Activated T-helper 1 cell treated with anti-CD3 and anti-CD28 coated beads, Interleukin-12 subunit alpha, Interleukin-12 subunit beta, Interleukin-2, Interleukin-4 antibody, amounts not matched to agents 30 ng/mL and 10 ng/mL and 1 ng/mL, durations not matched to agents 14 hours and 24 hours and 36 hours (primary cell): ENCODE measurements at regions of chr11 and their contacts with region 1.

Region 1: GRCh38 chr11:11265994-11266606 is 87.0 kb downstream of the CSNK2A3 start:
- DNase-seq: peak; percentile 45
- H3K4me3 Mint-ChIP-seq: no peak overlapping the region
- H3K27ac Mint-ChIP-seq: no peak overlapping the region
- H3K4me1 Mint-ChIP-seq: no peaks in the 10 kb centered on the region
- H3K27me3 Mint-ChIP-seq: peaks cover 2% of the 10 kb centered on the region

Region 2: GRCh38 chr11:11028017-11028692 is 237.9 kb before region 1 on chr11:
- intact Hi-C with region 1: loop called (anchors 1 kb)
- DNase-seq: peak; percentile 57
- H3K4me3 Mint-ChIP-seq: no peak overlapping the region
- H3K27ac Mint-ChIP-seq: no peak overlapping the region
- H3K4me1 Mint-ChIP-seq: no peaks in the 10 kb centered on the region
- H3K27me3 Mint-ChIP-seq: peaks cover 16% of the 10 kb centered on the region

Region 3: GRCh38 chr11:11036848-11037732 is 229.0 kb before region 1 on chr11:
- intact Hi-C with region 1: loop called (anchors 1 kb)
- DNase-seq: peak; percentile 8
- H3K4me3 Mint-ChIP-seq: no peak overlapping the region
- H3K27ac Mint-ChIP-seq: no peak overlapping the region
- H3K4me1 Mint-ChIP-seq: no peaks in the 10 kb centered on the region
- H3K27me3 Mint-ChIP-seq: peaks cover 2% of the 10 kb centered on the region